ENCODE measurements at regions of chr6 and their contacts with region 1.

Region 1: GRCh38 chr6:25017932-25018567 is 82.3 kb upstream of the RIPOR2 start:
- DNase-seq: peak; percentile 91
- ATAC-seq: peak; percentile 78
- H3K4me3 Mint-ChIP-seq: peak overlapping the region; percentile 1
- H3K27ac Mint-ChIP-seq: peak overlapping the region; percentile 74
- H3K4me1 Mint-ChIP-seq: peaks cover 55% of the 10 kb centered on the region
- H3K27me3 Mint-ChIP-seq: no peaks in the 10 kb centered on the region

Region 2: GRCh38 chr6:24720604-24721460 is 297.2 kb before region 1 on chr6:
- CTCF ChIA-PET with region 1: interaction called, 4 read pairs
- POLR2A ChIA-PET with region 1: interaction called, 5 read pairs
- intact Hi-C with region 1: loop called (anchors 2 to 5 kb)
- DNase-seq: peak; percentile 100
- ATAC-seq: peak; percentile 88
- H3K4me3 Mint-ChIP-seq: peak overlapping the region; percentile 99
- H3K27ac Mint-ChIP-seq: peak overlapping the region; percentile 98
- H3K4me1 Mint-ChIP-seq: peaks cover 32% of the 10 kb centered on the region
- H3K27me3 Mint-ChIP-seq: no peaks in the 10 kb centered on the region

Region 3: DNA sequence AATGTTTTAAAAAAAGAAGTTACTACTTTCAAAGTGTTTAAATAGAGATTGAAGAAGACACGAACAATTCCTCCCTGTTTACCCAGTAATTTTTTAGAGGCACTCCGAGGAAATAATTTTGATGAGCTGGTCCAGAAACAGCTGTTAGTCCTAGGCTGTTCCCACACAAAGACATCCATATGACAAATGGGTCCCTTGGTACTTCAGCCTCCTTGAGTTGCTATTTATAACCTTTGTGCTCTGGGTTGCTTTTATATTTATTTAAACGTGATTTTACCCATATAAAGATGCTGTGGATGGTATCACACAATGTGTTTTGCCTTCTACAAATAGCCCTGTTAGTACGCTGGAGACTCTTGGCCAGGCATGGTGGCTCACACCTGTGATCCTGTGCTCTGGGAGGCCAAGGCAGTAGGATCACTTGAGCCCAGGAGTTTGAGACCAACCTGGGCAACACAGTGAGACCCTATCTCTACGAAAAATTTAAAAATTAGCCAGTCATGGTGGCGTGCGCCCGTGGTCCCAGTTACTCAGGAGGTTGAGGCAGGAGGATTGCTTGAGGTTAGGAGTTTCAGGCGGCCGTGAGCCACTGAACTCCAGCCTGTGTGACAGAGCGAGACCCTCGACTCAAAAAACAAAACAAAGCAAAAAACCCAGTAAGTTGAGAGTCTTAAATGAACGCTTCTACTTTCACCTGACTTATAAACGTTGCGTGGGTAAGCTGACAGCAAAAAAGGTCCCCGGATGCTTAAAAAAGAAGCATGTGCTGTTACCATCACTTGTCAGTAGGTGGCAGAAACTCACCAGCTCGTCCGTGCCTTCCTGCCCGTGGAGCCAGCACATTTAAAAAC is 162.4 kb before region 1 on chr6:
- CTCF ChIA-PET with region 1: interaction called, 89 read pairs
- POLR2A ChIA-PET with region 1: interaction called, 6 read pairs
- intact Hi-C with region 1: loop called (anchors 1 kb)
- DNase-seq: peak; percentile 79
- ATAC-seq: peak; percentile 61
- H3K4me3 Mint-ChIP-seq: peak overlapping the region; percentile 46
- H3K27ac Mint-ChIP-seq: peak overlapping the region; percentile 90
- H3K4me1 Mint-ChIP-seq: peaks cover 52% of the 10 kb centered on the region
- H3K27me3 Mint-ChIP-seq: no peaks in the 10 kb centered on the region

Region 4: DNA sequence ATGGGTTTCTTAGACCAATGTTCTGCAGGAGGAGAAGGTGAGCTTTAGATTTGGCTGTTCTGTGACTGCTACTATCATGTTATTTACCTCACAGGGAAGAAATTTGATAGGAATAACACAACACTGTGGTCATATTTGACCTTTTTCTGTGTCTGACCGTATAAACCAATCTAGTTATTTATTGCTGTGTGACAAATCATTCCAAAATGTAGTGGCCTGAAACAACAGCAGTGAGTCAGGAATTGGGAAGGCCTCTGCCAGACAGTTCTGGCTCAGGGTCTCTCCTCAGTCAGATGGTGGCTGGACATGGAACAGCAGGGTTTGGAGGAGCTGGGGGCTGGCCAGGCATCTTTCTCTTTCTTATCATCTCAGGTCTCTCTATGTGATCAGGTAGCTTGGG is 115.3 kb before region 1 on chr6:
- CTCF ChIA-PET with region 1: interaction called, 13 read pairs
- POLR2A ChIA-PET with region 1: no interaction called
- intact Hi-C with region 1: no loop called
- DNase-seq: no peak
- ATAC-seq: no peak
- H3K4me3 Mint-ChIP-seq: no peak overlapping the region
- H3K27ac Mint-ChIP-seq: peak overlapping the region; percentile 78
- H3K4me1 Mint-ChIP-seq: peaks cover 92% of the 10 kb centered on the region
- H3K27me3 Mint-ChIP-seq: no peaks in the 10 kb centered on the region

Region 5: DNA sequence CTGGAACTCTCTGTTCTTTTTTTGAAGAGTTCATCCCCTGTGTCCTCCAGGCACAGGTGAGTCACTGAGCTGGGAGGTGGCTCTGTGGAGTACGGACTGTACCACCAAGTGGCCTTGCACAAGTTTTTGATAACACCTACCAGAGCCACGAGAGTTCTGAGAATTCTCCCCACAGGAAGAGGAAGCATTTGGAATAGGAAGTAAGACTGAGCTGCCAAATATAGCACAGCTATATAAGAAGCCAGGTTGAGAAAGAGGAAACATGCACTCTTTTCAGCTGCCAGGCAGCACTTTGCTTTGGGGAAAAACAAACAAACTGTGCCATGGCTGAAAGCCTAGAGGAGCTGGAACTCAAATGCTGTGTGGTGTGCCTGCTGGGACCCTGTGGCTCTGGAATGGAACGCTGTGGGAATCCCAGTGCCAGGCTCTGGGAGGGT is 11.5 kb before region 1 on chr6:
- CTCF ChIA-PET with region 1: interaction called, 43 read pairs
- POLR2A ChIA-PET with region 1: no interaction called
- intact Hi-C with region 1: no loop called
- DNase-seq: peak; percentile 62
- ATAC-seq: peak; percentile 58
- H3K4me3 Mint-ChIP-seq: peak overlapping the region; percentile 32
- H3K27ac Mint-ChIP-seq: peak overlapping the region; percentile 79
- H3K4me1 Mint-ChIP-seq: peaks cover 83% of the 10 kb centered on the region
- H3K27me3 Mint-ChIP-seq: no peaks in the 10 kb centered on the region